ENCODE measurements at regions of chr7 and their contacts with region 1.

Region 1: GRCh38 chr7:101602484-101603241 is 26.4 kb downstream of the MYL10 start:
- DNase-seq: peak; percentile 61 to 81
- ATAC-seq: peak; percentile 68 to 91 (median 77)
- H3K4me3 ChIP-seq: no peak overlapping the region
- H3K4me3 Mint-ChIP-seq: no peak overlapping the region
- H3K27ac ChIP-seq: no peak overlapping the region
- H3K27ac Mint-ChIP-seq: no peak overlapping the region
- H3K4me1 ChIP-seq: peaks cover 2% of the 10 kb centered on the region
- H3K4me1 Mint-ChIP-seq: no peaks in the 10 kb centered on the region
- H3K27me3 ChIP-seq: no peaks in the 10 kb centered on the region
- H3K27me3 Mint-ChIP-seq: no peaks in the 10 kb centered on the region
- CTCF ChIP-seq: peak; percentile 75

Region 2: GRCh38 chr7:102272075-102272917 is 669.6 kb after region 1 on chr7:
- intact Hi-C with region 1: loop called (anchors 1 kb)
- DNase-seq: peak; percentile 75 to 84
- ATAC-seq: peak; percentile 62 to 92 (median 73)
- H3K4me3 ChIP-seq: no peak overlapping the region
- H3K4me3 Mint-ChIP-seq: no peak overlapping the region
- H3K27ac ChIP-seq: no peak overlapping the region
- H3K27ac Mint-ChIP-seq: no peak overlapping the region
- H3K4me1 ChIP-seq: no peaks in the 10 kb centered on the region
- H3K4me1 Mint-ChIP-seq: peaks cover 0 to 5% of the 10 kb centered on the region in 2 donors
- H3K27me3 ChIP-seq: no peaks in the 10 kb centered on the region
- H3K27me3 Mint-ChIP-seq: no peaks in the 10 kb centered on the region
- CTCF ChIP-seq: peak; percentile 87

Measured in natural killer cell (primary cell).